Activated CD8-positive, alpha-beta T cell treated with anti-CD3 and anti-CD28 coated beads, Interleukin-2, amount 10 ng/mL, durations not matched to agents 7 days and 5 days (primary cell): ENCODE measurements at regions of chrX and their contacts with region 1.

Region 1: GRCh38 chrX:56978172-56978571 is 17.2 kb downstream of the SPIN3 start:
- DNase-seq: peak; percentile 62
- ATAC-seq: peak; percentile 78
- H3K4me3 Mint-ChIP-seq: no peak overlapping the region
- H3K27ac Mint-ChIP-seq: no peak overlapping the region
- H3K4me1 Mint-ChIP-seq: no peaks in the 10 kb centered on the region
- H3K27me3 Mint-ChIP-seq: no peaks in the 10 kb centered on the region

Region 2: GRCh38 chrX:56764153-56764974 is 213.8 kb before region 1 on chrX:
- CTCF ChIA-PET with region 1: interaction called, 22 read pairs
- POLR2A ChIA-PET with region 1: no interaction called
- DNase-seq: peak; percentile 79
- ATAC-seq: peak; percentile 72
- H3K4me3 Mint-ChIP-seq: peak overlapping the region; percentile 70
- H3K27ac Mint-ChIP-seq: peak overlapping the region; percentile 97
- H3K4me1 Mint-ChIP-seq: peaks cover 50% of the 10 kb centered on the region
- H3K27me3 Mint-ChIP-seq: no peaks in the 10 kb centered on the region

Region 3: DNA sequence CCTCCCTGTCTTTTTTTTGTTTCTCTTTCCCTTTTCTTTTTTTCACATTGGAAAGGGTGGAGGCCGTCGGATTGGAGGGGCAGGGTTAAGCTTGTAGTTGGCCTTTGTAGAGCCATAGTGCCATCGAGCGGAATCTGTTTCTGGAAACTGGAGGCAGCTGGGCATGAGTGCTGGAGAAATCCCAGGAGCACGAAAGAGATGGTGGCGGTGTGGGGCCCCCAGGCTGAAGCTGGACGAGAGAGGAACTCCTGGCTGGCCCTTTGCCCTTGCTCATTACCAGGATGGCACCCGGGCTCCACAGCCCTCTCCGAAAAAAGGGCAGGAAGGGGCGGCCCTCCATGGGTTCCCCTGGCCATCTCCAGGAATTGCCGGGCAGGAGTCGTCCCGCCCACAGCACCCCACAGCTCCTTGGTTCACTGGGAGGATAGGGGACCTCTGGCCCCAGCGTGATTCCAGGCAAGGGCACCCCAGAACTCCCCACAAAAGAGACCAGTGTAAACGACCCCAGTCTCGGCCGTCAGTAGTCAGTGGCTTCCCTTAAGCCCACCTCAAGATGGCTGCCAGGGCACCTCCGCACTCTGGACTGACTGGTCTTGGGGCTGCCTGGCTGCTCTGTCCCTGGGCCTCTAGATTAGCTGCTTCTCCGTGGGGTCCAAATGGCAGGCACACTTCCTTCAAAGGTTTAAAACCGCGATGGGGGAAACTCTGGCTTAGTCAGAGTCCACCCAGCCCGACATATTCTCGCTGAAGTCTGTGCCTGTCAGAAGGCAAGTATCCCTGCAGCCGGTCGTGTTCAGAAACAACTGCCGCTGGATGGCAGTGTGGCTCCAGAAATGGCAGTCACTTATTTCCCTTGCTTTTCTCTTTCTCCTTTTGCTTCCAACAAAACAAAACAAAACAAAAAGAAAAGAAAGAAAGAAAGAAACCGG is 175.0 kb before region 1 on chrX:
- CTCF ChIA-PET with region 1: interaction called, 10 read pairs
- POLR2A ChIA-PET with region 1: no interaction called
- DNase-seq: peak; percentile 58
- ATAC-seq: no peak
- H3K4me3 Mint-ChIP-seq: no peak overlapping the region
- H3K27ac Mint-ChIP-seq: no peak overlapping the region
- H3K4me1 Mint-ChIP-seq: peaks cover 36% of the 10 kb centered on the region
- H3K27me3 Mint-ChIP-seq: no peaks in the 10 kb centered on the region

Region 4: DNA sequence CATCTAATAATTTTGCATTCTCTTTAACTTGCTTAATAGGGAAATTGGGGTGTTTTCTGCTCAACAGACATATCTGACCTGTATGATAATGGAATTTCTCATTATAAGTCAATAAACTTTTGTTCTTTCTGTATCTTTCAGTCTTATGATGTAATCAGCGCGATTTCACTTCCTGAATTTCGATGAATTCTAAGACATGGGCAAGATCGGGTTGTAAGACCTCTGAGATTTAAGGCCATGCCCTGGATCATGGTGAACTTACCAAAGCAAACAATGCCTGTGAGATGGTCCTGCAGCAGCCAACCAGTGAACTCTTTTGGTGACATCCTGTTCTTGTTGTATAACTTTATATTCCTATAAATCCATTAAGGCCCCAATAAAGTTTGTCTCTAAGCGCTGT is 161.0 kb before region 1 on chrX:
- CTCF ChIA-PET with region 1: no interaction called
- POLR2A ChIA-PET with region 1: no interaction called
- DNase-seq: no peak
- ATAC-seq: no peak
- H3K4me3 Mint-ChIP-seq: no peak overlapping the region
- H3K27ac Mint-ChIP-seq: no peak overlapping the region
- H3K4me1 Mint-ChIP-seq: peaks cover 23% of the 10 kb centered on the region
- H3K27me3 Mint-ChIP-seq: no peaks in the 10 kb centered on the region